A549 (cell line): ENCODE measurements at regions of chr7 and their contacts with region 1.

Region 1: DNA sequence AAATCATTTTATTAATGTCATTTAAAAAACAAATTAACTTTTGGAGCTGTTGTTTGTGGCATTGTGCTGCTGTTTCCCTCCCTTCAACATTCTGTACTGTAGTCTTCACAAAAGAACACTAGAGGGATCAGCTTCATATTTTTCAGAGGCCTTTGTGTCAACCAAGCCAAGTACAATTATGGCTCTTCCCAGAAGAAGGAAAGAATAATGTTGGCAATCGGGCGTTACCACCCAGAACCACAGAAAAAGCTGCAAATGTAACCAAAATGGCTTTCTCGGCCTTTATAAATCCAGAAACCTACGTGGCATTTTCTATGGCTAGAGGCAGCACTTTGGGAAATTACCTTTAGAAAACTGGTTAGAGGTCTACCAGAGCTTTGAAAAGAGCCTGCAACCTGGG is 98.8 kb upstream of the COL1A2 start:
- DNase-seq: peak; percentile 18 to 64
- ATAC-seq: peak; percentile 76 to 87; a peak in 5 of 6 replicates
- H3K4me3 ChIP-seq: no peak overlapping the region
- H3K27ac ChIP-seq: peak overlapping the region in 1 of 2 experiments; percentile 55; a peak in 3 of 6 replicates
- H3K4me1 ChIP-seq: peaks cover 38% of the 10 kb centered on the region
- CTCF ChIP-seq: peak; percentile 66
- EP300 ChIP-seq: no peak
- POLR2A ChIP-seq: no peak
- RAD21 ChIP-seq: peak; percentile 82 to 83

Region 2: DNA sequence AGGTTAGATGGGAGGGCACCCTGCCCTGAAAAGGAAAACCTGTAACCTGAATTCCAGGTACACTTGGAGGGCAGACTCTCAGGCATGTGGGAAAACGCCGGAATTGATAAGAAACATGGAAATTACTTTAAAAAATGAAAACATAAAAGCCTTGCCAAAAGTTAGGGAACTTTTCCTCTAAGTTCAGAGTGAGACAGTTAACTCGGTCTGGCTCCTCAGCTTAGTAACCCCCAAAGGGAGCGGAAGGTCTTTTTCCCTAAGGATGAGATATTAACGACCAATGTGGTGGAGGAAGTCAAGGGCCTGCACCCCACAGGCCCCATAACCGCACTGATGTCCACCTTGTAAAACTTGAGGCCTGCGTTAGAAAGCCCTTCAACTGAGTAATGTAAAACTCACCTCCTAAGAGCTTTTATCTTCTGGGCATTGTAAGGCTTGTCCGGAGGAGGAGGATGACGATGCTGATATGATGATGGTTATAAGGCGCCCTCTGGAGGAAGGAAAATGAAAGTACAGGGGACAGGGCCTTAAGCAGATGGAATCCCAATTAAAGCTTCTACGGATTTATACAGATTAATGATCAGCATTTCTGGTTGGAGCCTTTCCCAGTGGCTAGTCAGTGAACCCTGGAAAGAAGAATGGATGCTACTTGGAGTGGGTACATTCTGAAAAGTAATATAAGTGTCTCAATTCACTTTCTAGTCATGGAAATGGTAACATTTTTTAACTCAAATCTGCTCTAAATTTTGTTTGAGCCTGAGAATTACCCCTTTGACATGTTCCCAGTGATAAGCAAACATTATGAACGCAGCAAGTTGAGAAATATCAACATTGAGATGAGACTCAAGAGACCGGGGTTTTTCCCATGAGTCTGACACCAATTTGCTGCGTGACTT is 99.5 kb after region 1 on chr7:
- CTCF ChIA-PET with region 1: interaction called, 28 read pairs
- POLR2A ChIA-PET with region 1: no interaction called
- DNase-seq: peak; percentile 47 to 76
- ATAC-seq: peak; percentile 44 to 86; a peak in 5 of 6 replicates
- H3K4me3 ChIP-seq: no peak overlapping the region
- H3K27ac ChIP-seq: peak overlapping the region in 1 of 2 experiments; percentile 19; a peak in 1 of 6 replicates
- H3K4me1 ChIP-seq: peaks cover 19% of the 10 kb centered on the region
- CTCF ChIP-seq: peak; percentile 54
- EP300 ChIP-seq: no peak
- POLR2A ChIP-seq: no peak
- RAD21 ChIP-seq: peak; percentile 73 to 85

Region 3: GRCh38 chr7:94400643-94401427 is 105.0 kb after region 1 on chr7:
- CTCF ChIA-PET with region 1: interaction called, 28 read pairs
- POLR2A ChIA-PET with region 1: no interaction called
- DNase-seq: no peak
- ATAC-seq: no peak
- H3K4me3 ChIP-seq: no peak overlapping the region
- H3K27ac ChIP-seq: no peak overlapping the region
- H3K4me1 ChIP-seq: no peaks in the 10 kb centered on the region; the same call in 2 of the 3 replicates
- CTCF ChIP-seq: no peak
- EP300 ChIP-seq: no peak
- POLR2A ChIP-seq: no peak
- RAD21 ChIP-seq: no peak